Gastrocnemius medialis (tissue), 4 donors: ENCODE measurements at regions of chr20 and their contacts with region 1.

Region 1: GRCh38 chr20:49989234-49990065 is 6.7 kb downstream of the SNAI1 start:
- DNase-seq: peak in 1 of 2 donors; percentile 66
- ATAC-seq: peak; percentile 52 to 57
- H3K4me3 ChIP-seq: no peak overlapping the region
- H3K27ac ChIP-seq: peak overlapping the region; percentile 49 to 72 (median 64)
- H3K4me1 ChIP-seq: peaks cover 14 to 20% of the 10 kb centered on the region in 2 donors
- H3K27me3 ChIP-seq: no peaks in the 10 kb centered on the region
- CTCF ChIP-seq: no peak
- POLR2A ChIP-seq: no peak

Region 2: DNA sequence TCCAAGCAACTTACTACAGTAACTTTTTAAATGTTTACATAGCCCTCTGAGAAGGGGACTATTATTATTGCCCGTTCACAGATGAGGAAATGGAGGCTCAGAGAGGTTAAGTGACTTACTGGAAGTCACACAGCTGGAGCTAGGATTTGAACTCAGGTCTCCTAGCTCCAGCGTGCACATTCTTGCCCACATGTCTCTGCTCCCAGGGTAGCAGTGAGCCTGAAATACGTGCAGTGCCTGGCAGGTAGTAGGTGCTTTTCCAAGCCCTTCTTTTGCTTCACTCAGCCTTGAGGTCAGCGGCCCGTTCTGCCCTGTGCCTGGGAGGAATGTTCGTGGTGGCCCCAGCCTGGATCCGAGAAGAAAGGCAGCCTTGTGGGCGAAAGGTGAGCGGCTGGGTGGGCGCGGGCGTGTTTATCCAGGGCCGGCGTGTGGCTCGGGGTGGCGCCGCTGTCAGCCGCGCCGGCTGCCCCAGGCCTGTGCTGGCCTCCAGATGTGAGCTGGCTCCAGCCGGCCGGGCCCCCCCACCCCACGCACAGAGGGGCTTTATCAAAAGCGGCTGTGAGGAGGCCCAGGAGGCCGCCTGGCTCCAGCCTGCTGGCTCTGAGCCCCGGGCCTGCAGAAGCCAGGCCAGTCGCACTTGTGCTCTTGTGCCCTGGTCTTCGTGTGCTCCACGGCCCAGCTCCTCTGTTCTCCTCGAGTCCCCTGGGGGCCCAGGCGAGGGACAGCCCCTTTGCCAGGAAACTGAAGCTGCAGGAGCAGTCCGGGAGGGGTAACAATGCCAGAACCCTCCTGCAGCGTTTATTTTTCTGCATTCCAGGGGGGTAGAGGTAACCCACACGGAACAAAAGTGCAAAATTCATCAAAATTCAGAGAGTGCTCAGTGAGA is 65.4 kb after region 1 on chr20:
- in situ Hi-C with region 1: loop called in 1 of 4 experiments (anchors 10 kb)
- intact Hi-C with region 1: no loop called
- DNase-seq: no peak
- ATAC-seq: peak in 1 of 2 donors; percentile 12
- H3K4me3 ChIP-seq: peak overlapping the region in 1 of 4 donors; percentile 2
- H3K27ac ChIP-seq: no peak overlapping the region
- H3K4me1 ChIP-seq: peaks cover 6 to 9% of the 10 kb centered on the region in 2 donors
- H3K27me3 ChIP-seq: no peaks in the 10 kb centered on the region
- CTCF ChIP-seq: no peak
- POLR2A ChIP-seq: no peak